Activated B cell treated with CpG ODN at 0.5 μM for 24 hours (primary cell): ENCODE measurements at regions of chr20 and their contacts with region 1.

Region 1: GRCh38 chr20:41693136-41693979 is 75.2 kb upstream of the CHD6 start:
- DNase-seq: peak; percentile 63
- ATAC-seq: peak; percentile 84
- H3K4me3 Mint-ChIP-seq: peak overlapping the region; percentile 92
- H3K27ac Mint-ChIP-seq: peak overlapping the region; percentile 90
- H3K4me1 Mint-ChIP-seq: peaks cover 17% of the 10 kb centered on the region
- H3K27me3 Mint-ChIP-seq: peaks cover 4% of the 10 kb centered on the region
- CTCF ChIP-seq: no peak

Region 2: DNA sequence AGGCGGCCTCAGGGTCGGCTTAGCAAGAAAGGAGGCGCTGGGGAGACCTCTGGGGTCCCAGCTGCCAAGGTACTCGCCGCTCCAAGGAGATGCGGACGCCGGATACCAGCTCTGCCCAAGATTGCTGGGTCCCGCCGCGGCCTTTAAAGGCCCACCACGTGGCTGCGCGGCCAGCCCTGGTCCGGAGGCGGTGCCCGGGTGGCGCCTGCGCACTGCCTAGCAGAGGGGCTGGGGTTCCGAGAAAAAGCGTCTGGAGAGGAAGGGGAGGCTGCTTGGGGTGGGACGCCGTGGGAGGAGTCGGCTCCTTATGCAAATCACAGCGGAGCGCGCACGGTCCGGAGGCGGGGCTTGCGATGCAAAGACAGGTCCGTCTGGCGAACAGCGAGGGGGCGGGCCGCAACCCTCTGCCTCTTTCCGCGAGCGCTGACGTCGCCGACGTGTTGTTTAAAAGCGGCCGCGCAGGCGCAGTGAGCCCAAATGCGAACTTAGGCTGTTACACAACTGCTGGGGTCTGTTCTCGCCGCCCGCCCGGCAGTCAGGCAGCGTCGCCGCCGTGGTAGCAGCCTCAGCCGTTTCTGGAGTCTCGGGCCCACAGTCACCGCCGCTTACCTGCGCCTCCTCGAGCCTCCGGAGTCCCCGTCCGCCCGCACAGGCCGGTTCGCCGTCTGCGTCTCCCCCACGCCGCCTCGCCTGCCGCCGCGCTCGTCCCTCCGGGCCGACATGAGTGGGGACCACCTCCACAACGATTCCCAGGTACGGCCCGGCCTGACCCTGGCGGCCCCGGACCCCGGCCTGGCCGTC is 664.8 kb before region 1 on chr20 and contains the start of gene TOP1:
- CTCF ChIA-PET with region 1: no interaction called
- POLR2A ChIA-PET with region 1: no interaction called
- intact Hi-C with region 1: loop called (anchors 1 kb)
- DNase-seq: peak; percentile 98
- ATAC-seq: peak; percentile 98
- H3K4me3 Mint-ChIP-seq: peak within 1 kb of the TSS; percentile 93
- H3K27ac Mint-ChIP-seq: peak within 1 kb of the TSS; percentile 90
- H3K4me1 Mint-ChIP-seq: peaks cover 57% of the 10 kb centered on the region
- H3K27me3 Mint-ChIP-seq: no peaks in the 10 kb centered on the region
- CTCF ChIP-seq: no peak
- total RNA-seq, gene TOP1: 62.7 and 63.3 TPM in 2 replicates

Region 3: GRCh38 chr20:41317536-41318270 is 375.7 kb before region 1 on chr20 and contains the start of gene ZHX3:
- CTCF ChIA-PET with region 1: no interaction called
- POLR2A ChIA-PET with region 1: no interaction called
- intact Hi-C with region 1: loop called (anchors 10 kb)
- DNase-seq: peak; percentile 99
- ATAC-seq: peak; percentile 97
- H3K4me3 Mint-ChIP-seq: peak within 1 kb of the TSS; percentile 91
- H3K27ac Mint-ChIP-seq: peak within 1 kb of the TSS; percentile 87
- H3K4me1 Mint-ChIP-seq: peaks cover 23% of the 10 kb centered on the region
- H3K27me3 Mint-ChIP-seq: no peaks in the 10 kb centered on the region
- CTCF ChIP-seq: no peak
- total RNA-seq, gene ZHX3: 19.5 and 21.2 TPM in 2 replicates

Region 4: DNA sequence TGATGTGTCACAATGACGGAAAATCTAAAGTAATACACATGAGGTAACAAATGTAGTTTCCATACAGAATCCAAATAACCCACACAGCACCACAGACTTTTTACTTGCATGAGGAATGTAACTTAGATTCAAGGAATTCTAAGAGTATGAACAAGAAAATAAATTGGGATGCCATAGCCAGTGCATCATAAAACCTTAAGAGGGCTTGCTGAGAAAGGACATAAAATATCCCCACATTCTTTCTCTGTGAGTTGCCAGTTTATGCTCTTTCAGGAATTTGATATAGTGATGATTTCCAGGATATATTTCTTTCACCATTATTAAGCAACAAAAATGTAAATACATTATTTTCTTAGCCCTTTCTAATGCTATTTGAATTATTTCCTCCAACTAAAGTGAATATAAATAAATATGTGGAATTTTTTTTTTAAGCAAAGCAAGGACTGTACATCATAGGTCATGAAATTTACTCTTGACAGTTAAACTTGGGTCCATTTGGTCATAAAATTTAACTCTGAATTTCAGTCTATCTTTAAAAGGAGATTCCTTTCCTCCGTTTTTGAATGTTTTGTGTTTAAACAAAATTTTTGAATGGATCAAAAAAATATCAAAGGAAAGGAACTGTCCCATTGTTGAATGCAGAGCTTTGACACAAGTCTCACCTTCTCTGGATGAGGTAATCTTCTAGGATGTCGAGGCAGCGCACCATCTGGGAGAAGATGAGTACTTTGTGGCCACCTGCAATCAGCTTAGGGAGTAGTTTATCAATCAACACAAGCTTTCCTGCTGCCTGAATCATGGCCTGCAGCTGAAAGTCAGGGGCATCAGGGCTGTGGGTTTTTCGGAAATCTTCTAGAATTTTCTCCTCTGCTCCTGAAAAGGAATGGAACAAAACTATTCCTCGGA is 210.5 kb before region 1 on chr20:
- CTCF ChIA-PET with region 1: no interaction called
- POLR2A ChIA-PET with region 1: no interaction called
- intact Hi-C with region 1: no loop called
- DNase-seq: no peak
- ATAC-seq: no peak
- H3K4me3 Mint-ChIP-seq: no peak overlapping the region
- H3K27ac Mint-ChIP-seq: no peak overlapping the region
- H3K4me1 Mint-ChIP-seq: peaks cover 10% of the 10 kb centered on the region
- H3K27me3 Mint-ChIP-seq: no peaks in the 10 kb centered on the region
- CTCF ChIP-seq: no peak

Region 5: GRCh38 chr20:41617931-41618806 is 75.2 kb before region 1 on chr20 and contains the start of gene CHD6:
- CTCF ChIA-PET with region 1: interaction called, 7 read pairs
- POLR2A ChIA-PET with region 1: interaction called, 29 read pairs
- intact Hi-C with region 1: loop called (anchors 1 kb)
- DNase-seq: peak; percentile 97
- ATAC-seq: peak; percentile 96
- H3K4me3 Mint-ChIP-seq: peak within 1 kb of the TSS; percentile 94
- H3K27ac Mint-ChIP-seq: peak within 1 kb of the TSS; percentile 85
- H3K4me1 Mint-ChIP-seq: peaks cover 49% of the 10 kb centered on the region
- H3K27me3 Mint-ChIP-seq: no peaks in the 10 kb centered on the region
- CTCF ChIP-seq: no peak
- total RNA-seq, gene CHD6: 54.5 and 59.9 TPM in 2 replicates

Region 6: DNA sequence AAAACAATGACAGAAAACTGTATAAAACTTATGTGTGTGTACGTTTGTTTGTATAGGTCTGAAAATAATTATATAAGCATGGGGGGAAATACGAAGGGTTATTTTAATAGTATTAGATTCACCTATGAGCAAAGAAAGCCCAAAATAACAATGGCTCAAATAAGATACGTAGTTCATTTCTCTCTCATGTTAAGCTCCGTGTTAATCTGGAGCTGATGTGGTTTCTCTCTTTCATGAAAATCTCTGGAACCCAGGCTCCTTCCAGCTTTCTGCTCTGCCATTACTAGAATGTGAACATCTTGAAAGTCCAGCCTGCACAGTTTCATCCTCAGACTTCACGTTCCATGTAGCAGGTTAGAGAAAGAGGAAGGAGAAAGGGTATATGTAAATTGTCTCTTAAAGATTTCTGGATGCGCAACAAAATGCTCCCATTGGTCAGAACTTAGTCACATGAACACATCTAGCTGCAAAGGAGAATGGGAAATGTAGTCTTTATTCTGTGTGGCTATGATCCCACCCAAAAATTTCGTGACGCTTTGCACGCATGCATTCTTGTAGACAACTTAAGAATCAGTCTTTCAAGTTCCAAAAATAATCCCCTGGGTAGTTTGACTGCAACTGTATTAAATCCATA is 28.9 kb before region 1 on chr20:
- CTCF ChIA-PET with region 1: interaction called, 3 read pairs
- POLR2A ChIA-PET with region 1: interaction called, 7 read pairs
- intact Hi-C with region 1: loop called (anchors 1 kb)
- DNase-seq: no peak
- ATAC-seq: peak; percentile 85
- H3K4me3 Mint-ChIP-seq: peak overlapping the region; percentile 81
- H3K27ac Mint-ChIP-seq: peak overlapping the region; percentile 88
- H3K4me1 Mint-ChIP-seq: peaks cover 5% of the 10 kb centered on the region
- H3K27me3 Mint-ChIP-seq: peaks cover 20% of the 10 kb centered on the region
- CTCF ChIP-seq: no peak

Region 7: DNA sequence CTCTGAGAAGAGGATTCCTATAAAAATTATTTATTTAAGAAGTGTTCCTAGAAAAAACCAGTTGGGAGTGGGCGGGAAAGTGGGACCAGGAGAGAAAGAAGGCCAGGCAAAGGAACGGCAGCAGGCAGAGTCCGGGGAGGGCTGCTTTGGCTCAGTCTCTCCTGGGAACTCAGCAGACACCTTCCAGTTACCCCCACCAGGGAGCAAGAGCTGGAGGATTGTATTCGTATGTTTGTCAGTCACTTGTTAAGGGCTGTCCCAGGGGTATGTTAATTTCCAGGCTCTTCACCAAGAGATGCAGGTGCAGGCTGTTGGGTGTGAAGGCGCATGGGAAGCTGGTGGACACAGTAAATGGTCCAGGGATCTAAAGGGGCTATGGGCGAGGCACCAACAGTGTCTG is 22.2 kb before region 1 on chr20:
- CTCF ChIA-PET with region 1: no interaction called
- POLR2A ChIA-PET with region 1: interaction called, 20 read pairs
- intact Hi-C with region 1: no loop called
- DNase-seq: no peak
- ATAC-seq: no peak
- H3K4me3 Mint-ChIP-seq: no peak overlapping the region
- H3K27ac Mint-ChIP-seq: no peak overlapping the region
- H3K4me1 Mint-ChIP-seq: peaks cover 15% of the 10 kb centered on the region
- H3K27me3 Mint-ChIP-seq: peaks cover 19% of the 10 kb centered on the region
- CTCF ChIP-seq: no peak